A673 (cell line): ENCODE measurements at regions of chr12 and their contacts with region 1.

Region 1: GRCh38 chr12:89345830-89346740 is 6.2 kb downstream of the DUSP6 start:
- DNase-seq: peak; percentile 99
- H3K4me3 ChIP-seq: peak overlapping the region; percentile 11
- H3K27ac ChIP-seq: peak overlapping the region; percentile 97
- H3K4me1 ChIP-seq: peaks cover 47% of the 10 kb centered on the region
- H3K27me3 ChIP-seq: no peaks in the 10 kb centered on the region
- CTCF ChIP-seq: no peak

Region 2: DNA sequence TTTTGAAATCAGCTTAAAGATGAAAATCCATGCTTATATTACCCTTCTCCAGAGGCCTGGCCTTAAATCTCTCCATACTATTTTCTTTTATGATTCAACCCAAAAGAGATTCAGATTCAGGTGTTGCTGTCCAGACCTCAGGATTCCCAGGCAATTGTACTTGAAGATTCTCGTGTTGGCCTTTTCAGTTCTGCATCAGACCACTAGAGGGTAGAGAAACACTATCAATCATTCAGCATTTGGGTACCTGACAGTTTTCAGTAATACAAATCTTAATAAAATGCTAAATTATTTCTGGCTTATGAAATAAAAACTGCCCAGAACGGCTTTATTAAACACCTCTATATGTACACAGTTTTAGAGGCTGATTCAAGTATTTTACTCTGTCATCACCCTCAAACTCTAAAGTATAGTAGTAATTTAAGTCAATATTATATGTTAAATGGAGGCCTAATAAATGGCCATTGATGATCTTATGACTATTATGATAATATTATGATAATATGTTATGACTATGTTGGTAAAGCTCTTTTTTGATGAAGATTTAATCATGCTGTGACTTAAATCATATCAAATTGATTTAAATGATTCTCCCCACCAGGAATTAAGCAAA is 294.9 kb before region 1 on chr12:
- CTCF ChIA-PET with region 1: no interaction called
- POLR2A ChIA-PET with region 1: no interaction called
- intact Hi-C with region 1: loop called (anchors 2 kb)
- DNase-seq: peak; percentile 86
- H3K4me3 ChIP-seq: no peak overlapping the region
- H3K27ac ChIP-seq: no peak overlapping the region
- H3K4me1 ChIP-seq: peaks cover 66% of the 10 kb centered on the region
- H3K27me3 ChIP-seq: no peaks in the 10 kb centered on the region
- CTCF ChIP-seq: peak; percentile 95

Region 3: DNA sequence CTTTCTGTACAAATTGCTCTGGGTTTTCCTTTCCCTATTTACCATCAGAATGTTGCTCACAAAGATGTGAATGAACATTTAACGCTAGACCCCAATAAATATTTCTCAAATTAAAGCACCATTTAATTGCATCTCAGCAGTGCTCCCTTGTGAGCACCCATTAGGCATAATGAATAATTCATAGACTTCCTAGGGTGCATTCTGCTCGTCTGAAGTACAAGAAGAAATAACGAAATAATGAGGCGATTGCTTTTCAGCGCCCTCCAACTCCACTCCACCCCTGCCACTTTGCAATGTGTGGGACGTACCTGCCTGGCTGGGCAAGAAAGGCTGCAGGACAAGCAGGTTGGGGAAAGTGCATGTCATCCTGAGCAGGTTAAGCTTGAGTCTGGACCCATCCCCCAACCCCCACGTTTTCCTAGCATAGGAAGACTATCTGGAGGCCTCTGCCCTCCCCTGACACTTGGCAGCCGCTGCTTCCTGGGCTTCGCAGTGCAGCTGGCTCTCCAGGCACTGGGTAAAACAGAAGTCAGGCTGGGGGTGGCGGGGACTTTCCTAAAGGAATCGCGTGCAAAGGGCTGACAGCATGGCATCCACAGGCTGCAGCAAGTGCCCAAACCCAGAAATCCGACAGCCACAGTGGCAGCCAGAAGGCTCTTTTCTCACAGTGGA is 247.5 kb before region 1 on chr12:
- CTCF ChIA-PET with region 1: no interaction called
- POLR2A ChIA-PET with region 1: no interaction called
- intact Hi-C with region 1: loop called (anchors 1 kb)
- DNase-seq: peak; percentile 94
- H3K4me3 ChIP-seq: peak overlapping the region; percentile 26
- H3K27ac ChIP-seq: peak overlapping the region; percentile 60
- H3K4me1 ChIP-seq: peaks cover 45% of the 10 kb centered on the region
- H3K27me3 ChIP-seq: no peaks in the 10 kb centered on the region
- CTCF ChIP-seq: no peak

Region 4: DNA sequence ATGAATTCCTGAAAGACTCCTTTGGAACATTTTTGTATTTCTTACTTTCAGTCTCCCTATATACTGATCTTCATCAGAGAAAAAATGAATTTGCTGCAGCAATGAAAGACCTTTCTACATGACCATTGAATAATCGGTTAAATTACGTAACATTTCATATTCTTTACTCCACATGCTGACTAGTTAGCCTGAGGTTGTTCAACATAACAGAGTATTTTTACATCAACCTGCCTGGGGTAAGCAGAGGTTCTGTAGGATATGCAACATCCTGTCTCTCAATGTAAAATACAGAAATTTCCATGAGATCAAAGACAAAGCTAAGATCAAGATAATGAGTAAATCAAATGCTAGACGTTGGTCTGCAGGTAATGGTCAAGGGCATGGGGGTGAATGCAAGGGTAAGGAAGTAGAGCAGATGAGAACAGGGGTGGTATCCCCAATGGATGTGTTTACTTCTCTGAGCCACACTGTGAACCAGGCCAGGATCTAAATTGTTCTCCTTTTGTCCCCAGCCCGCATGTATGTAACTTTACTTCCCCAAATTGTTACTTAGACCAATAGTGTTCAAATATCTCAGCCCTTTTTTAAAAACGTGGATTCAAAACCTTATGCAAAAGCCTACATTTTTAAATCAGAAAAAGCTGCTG is 39.1 kb before region 1 on chr12:
- CTCF ChIA-PET with region 1: no interaction called
- POLR2A ChIA-PET with region 1: interaction called, 21 read pairs
- intact Hi-C with region 1: no loop called
- DNase-seq: no peak
- H3K4me3 ChIP-seq: no peak overlapping the region
- H3K27ac ChIP-seq: peak overlapping the region; percentile 87
- H3K4me1 ChIP-seq: peaks cover 59% of the 10 kb centered on the region
- H3K27me3 ChIP-seq: no peaks in the 10 kb centered on the region
- CTCF ChIP-seq: no peak

Region 5: GRCh38 chr12:89708565-89709156 is 362.6 kb after region 1 on chr12 and contains the start of gene ATP2B1:
- CTCF ChIA-PET with region 1: no interaction called
- POLR2A ChIA-PET with region 1: no interaction called
- intact Hi-C with region 1: no loop called
- DNase-seq: peak; percentile 91
- H3K4me3 ChIP-seq: peak within 1 kb of the TSS; percentile 89
- H3K27ac ChIP-seq: peak within 1 kb of the TSS; percentile 96
- H3K4me1 ChIP-seq: peaks cover 17% of the 10 kb centered on the region
- H3K27me3 ChIP-seq: no peaks in the 10 kb centered on the region
- CTCF ChIP-seq: no peak
- total RNA-seq, gene ATP2B1: 37.0 and 44.2 TPM in 2 replicates